ENCODE measurements at regions of chr18 and their contacts with region 1.

Region 1: GRCh38 chr18:26650310-26651268 is 102.2 kb upstream of the KCTD1 start:
- DNase-seq: no peak
- H3K4me3 Mint-ChIP-seq: no peak overlapping the region
- H3K27ac Mint-ChIP-seq: no peak overlapping the region
- H3K4me1 Mint-ChIP-seq: peaks cover 5% of the 10 kb centered on the region
- H3K27me3 Mint-ChIP-seq: peaks cover 15% of the 10 kb centered on the region
- CTCF ChIP-seq: no peak

Region 2: GRCh38 chr18:26405190-26405801 is 245.3 kb before region 1 on chr18:
- CTCF ChIA-PET with region 1: interaction called, 9 read pairs
- POLR2A ChIA-PET with region 1: no interaction called
- intact Hi-C with region 1: loop called (anchors 1 kb)
- DNase-seq: peak; percentile 64
- H3K4me3 Mint-ChIP-seq: no peak overlapping the region
- H3K27ac Mint-ChIP-seq: no peak overlapping the region
- H3K4me1 Mint-ChIP-seq: peaks cover 11% of the 10 kb centered on the region
- H3K27me3 Mint-ChIP-seq: no peaks in the 10 kb centered on the region
- CTCF ChIP-seq: peak; percentile 57

Region 3: GRCh38 chr18:26536664-26537063 is 113.9 kb before region 1 on chr18:
- CTCF ChIA-PET with region 1: no interaction called
- POLR2A ChIA-PET with region 1: no interaction called
- intact Hi-C with region 1: no loop called
- DNase-seq: peak; percentile 56
- H3K4me3 Mint-ChIP-seq: no peak overlapping the region
- H3K27ac Mint-ChIP-seq: peak overlapping the region; percentile 5
- H3K4me1 Mint-ChIP-seq: peaks cover 35% of the 10 kb centered on the region
- H3K27me3 Mint-ChIP-seq: no peaks in the 10 kb centered on the region
- CTCF ChIP-seq: no peak

Measured in MCF 10A (cell line).